CD4-positive, alpha-beta memory T cell (primary cell): ENCODE measurements at regions of chr12 and their contacts with region 1.

Region 1: DNA sequence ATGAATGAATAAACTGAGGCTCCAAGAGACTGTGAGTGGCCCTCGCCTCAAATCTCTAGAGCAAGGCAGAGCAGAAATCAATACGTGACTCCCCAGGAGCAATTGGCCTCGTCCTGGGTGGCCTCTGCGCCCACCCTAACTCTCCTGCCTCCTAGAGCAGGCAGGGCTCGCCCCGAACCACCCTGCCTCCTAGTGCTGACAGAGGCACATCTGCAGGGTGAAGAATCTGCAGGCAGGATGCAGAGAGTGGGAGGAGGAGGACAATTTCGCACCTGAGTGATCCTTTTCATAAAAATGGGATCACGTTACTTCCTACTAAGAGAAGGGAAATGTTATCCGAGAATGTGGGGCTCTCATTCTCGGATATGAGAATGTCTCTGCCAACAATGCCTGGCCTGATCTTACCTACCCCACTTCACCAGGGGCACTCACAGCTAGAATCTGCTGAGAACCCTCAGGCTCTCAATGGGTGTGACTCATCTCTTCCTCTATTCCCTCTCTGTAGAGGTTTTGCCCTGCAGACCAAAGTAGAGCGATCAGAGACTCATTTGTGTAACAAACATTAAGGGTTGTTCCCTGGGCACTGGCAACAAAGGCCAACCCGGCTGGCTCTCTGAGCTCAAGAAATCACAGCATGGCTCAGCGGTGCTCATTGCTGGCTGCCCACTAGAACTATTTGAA is 61.7 kb upstream of the BCL2L14 start:
- DNase-seq: peak; percentile 46 to 86 (median 56)
- H3K4me3 ChIP-seq: peak overlapping the region in 1 of 2 donors; percentile 12
- H3K4me3 Mint-ChIP-seq: peak overlapping the region; percentile 66 to 89 (median 80)
- H3K27ac ChIP-seq: peak overlapping the region; percentile 75
- H3K27ac Mint-ChIP-seq: peak overlapping the region; percentile 95 to 99 (median 97)
- H3K4me1 ChIP-seq: peaks cover 61% of the 10 kb centered on the region
- H3K4me1 Mint-ChIP-seq: peaks cover 65 to 92% (median 85%) of the 10 kb centered on the region in 4 donors
- H3K27me3 ChIP-seq: no peaks in the 10 kb centered on the region
- H3K27me3 Mint-ChIP-seq: no peaks in the 10 kb centered on the region

Region 2: GRCh38 chr12:11621797-11622423 is 387.2 kb before region 1 on chr12:
- CTCF ChIA-PET with region 1: no interaction called
- POLR2A ChIA-PET with region 1: no interaction called
- intact Hi-C with region 1: loop called (anchors 1 kb)
- DNase-seq: peak; percentile 21 to 43 (median 34)
- H3K4me3 ChIP-seq: no peak overlapping the region
- H3K4me3 Mint-ChIP-seq: no peak overlapping the region
- H3K27ac ChIP-seq: no peak overlapping the region
- H3K27ac Mint-ChIP-seq: peak overlapping the region in 2 of 7 donors; percentile 39 to 91
- H3K4me1 ChIP-seq: no peaks in the 10 kb centered on the region
- H3K4me1 Mint-ChIP-seq: peaks cover 0 to 6% (median 3%) of the 10 kb centered on the region in 4 donors
- H3K27me3 ChIP-seq: no peaks in the 10 kb centered on the region
- H3K27me3 Mint-ChIP-seq: no peaks in the 10 kb centered on the region

Region 3: DNA sequence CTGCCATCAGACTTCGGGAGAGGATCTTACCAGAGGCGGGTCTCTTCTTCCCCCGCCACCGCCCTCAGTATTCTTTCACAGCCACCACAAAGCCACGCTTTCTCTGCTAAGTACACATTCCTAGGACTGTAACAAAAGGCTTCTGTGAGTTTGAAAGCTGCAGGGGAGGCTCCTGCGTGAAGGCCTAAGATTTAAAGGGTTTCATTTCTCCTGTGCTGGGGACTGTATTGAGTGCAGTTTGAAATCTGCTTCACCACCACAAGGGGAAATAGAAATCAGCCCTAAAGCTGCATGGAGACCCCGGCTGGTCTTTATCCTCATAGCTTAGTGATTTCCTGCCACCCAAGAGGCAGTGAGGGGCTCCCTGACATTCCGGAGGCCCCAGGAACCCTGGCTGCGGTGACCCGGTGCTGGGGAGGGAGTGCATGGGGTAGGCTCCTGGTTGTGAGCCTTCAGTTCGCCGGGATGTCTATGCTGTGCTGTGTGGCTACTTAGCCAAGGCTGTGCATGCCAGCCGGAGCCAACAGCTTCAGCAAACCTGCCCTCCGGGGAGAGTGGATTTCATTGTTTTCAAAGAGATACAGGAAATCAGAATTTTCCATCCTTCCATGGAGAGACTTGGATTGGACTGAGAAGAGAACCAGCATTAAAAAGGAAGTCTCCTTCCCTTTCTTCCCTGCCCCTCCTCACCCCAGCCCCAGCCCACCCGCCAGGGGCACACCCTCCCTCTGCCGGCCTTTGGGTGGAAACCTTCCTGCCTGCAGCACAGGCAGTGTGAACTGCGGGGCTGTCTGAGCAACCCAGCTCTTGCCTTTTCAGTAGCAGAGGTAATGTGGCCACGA is 196.3 kb before region 1 on chr12:
- CTCF ChIA-PET with region 1: interaction called, 3 read pairs
- POLR2A ChIA-PET with region 1: interaction called, 4 read pairs
- intact Hi-C with region 1: loop called (anchors 5 kb)
- DNase-seq: peak in 1 of 5 donors; percentile 30
- H3K4me3 ChIP-seq: no peak overlapping the region
- H3K4me3 Mint-ChIP-seq: peak overlapping the region; percentile 46 to 87 (median 64)
- H3K27ac ChIP-seq: no peak overlapping the region
- H3K27ac Mint-ChIP-seq: peak overlapping the region; percentile 49 to 96 (median 88)
- H3K4me1 ChIP-seq: peaks cover 49% of the 10 kb centered on the region
- H3K4me1 Mint-ChIP-seq: peaks cover 38 to 82% (median 64%) of the 10 kb centered on the region in 4 donors
- H3K27me3 ChIP-seq: no peaks in the 10 kb centered on the region
- H3K27me3 Mint-ChIP-seq: no peaks in the 10 kb centered on the region

Region 4: DNA sequence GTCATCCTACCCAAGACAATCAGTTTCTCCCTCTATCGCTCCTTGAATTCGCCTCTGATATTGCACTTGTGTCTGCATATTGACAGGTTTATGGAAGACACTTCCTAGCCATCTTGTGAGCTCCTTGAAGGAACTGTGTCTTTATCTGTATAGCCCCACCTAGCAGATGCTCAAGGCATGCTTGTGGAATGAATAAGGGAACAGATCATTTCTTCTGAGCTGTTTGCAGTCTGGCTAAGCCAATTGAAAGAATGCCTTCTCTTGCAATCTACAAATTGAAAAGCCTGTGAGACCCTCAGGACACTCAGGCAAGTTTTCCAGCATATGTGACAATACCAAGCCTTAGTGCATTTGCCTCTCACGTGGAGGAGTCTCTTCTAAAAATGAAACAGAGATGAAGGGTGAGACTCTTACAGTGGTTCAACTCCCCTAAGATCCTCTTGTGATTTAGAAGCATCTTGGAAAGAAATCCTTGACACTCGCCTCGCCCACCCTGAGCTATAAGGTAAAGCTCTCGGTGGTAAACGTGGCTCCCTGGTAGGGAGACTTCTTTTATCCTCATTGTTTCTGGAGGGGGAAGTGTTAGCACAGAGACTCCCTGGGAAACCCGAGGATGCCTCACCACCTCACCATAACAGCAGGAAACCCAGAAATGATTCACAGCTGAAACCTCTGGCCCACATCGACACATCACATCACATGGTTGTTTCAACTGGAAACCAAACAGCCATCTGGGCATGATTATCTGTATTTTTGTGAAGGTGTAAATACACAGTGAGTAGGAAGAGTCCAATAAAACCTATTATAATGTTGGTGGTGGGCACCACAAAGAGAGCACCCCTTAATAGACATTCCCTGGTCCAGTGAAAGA is 50.6 kb before region 1 on chr12:
- CTCF ChIA-PET with region 1: interaction called, 4 read pairs
- POLR2A ChIA-PET with region 1: interaction called, 4 read pairs
- intact Hi-C with region 1: loop called (anchors 10 kb)
- DNase-seq: peak in 1 of 5 donors; percentile 8
- H3K4me3 ChIP-seq: no peak overlapping the region
- H3K4me3 Mint-ChIP-seq: peak overlapping the region in 7 of 8 donors; percentile 13 to 65 (median 30)
- H3K27ac ChIP-seq: no peak overlapping the region
- H3K27ac Mint-ChIP-seq: peak overlapping the region in 6 of 7 donors; percentile 11 to 86 (median 74)
- H3K4me1 ChIP-seq: peaks cover 25% of the 10 kb centered on the region
- H3K4me1 Mint-ChIP-seq: peaks cover 28 to 44% (median 34%) of the 10 kb centered on the region in 4 donors
- H3K27me3 ChIP-seq: no peaks in the 10 kb centered on the region
- H3K27me3 Mint-ChIP-seq: no peaks in the 10 kb centered on the region

Region 5: DNA sequence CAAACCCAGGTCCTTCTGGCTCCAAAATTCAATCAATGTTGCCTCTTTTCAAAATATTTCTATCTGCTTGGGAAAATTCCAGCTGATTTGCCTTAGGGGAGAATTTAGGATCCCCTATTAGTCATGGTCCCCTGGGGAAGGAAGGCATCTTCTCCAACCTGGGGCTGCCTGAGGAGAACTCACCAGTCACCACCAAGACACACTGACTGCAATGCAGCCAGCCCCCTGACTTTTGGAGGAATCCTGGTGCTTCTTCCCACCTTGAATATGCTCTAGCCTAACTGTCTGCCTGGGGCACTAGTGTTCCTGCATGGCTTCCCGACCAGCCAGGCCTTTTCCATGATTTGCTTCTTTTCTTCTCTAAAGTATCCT is 10.1 kb before region 1 on chr12:
- CTCF ChIA-PET with region 1: interaction called, 36 read pairs
- POLR2A ChIA-PET with region 1: interaction called, 38 read pairs
- intact Hi-C with region 1: loop called (anchors 1 kb)
- DNase-seq: no peak
- H3K4me3 ChIP-seq: peak overlapping the region in 1 of 2 donors; percentile 45
- H3K4me3 Mint-ChIP-seq: peak overlapping the region; percentile 6 to 71 (median 58)
- H3K27ac ChIP-seq: no peak overlapping the region
- H3K27ac Mint-ChIP-seq: peak overlapping the region; percentile 86 to 96 (median 93)
- H3K4me1 ChIP-seq: peaks cover 36% of the 10 kb centered on the region
- H3K4me1 Mint-ChIP-seq: peaks cover 29 to 64% (median 40%) of the 10 kb centered on the region in 4 donors
- H3K27me3 ChIP-seq: no peaks in the 10 kb centered on the region
- H3K27me3 Mint-ChIP-seq: no peaks in the 10 kb centered on the region

Region 6: GRCh38 chr12:12546314-12546772 is 537.3 kb after region 1 on chr12:
- CTCF ChIA-PET with region 1: no interaction called
- POLR2A ChIA-PET with region 1: no interaction called
- intact Hi-C with region 1: no loop called
- DNase-seq: no peak
- H3K4me3 ChIP-seq: no peak overlapping the region
- H3K4me3 Mint-ChIP-seq: no peak overlapping the region
- H3K27ac ChIP-seq: no peak overlapping the region
- H3K27ac Mint-ChIP-seq: peak overlapping the region in 2 of 7 donors; percentile 22 to 51
- H3K4me1 ChIP-seq: peaks cover 12% of the 10 kb centered on the region
- H3K4me1 Mint-ChIP-seq: peaks cover 22 to 58% (median 40%) of the 10 kb centered on the region in 4 donors
- H3K27me3 ChIP-seq: no peaks in the 10 kb centered on the region
- H3K27me3 Mint-ChIP-seq: no peaks in the 10 kb centered on the region